Gastrocnemius medialis (tissue), 4 donors: ENCODE measurements at regions of chr19 and their contacts with region 1.

Region 1: DNA sequence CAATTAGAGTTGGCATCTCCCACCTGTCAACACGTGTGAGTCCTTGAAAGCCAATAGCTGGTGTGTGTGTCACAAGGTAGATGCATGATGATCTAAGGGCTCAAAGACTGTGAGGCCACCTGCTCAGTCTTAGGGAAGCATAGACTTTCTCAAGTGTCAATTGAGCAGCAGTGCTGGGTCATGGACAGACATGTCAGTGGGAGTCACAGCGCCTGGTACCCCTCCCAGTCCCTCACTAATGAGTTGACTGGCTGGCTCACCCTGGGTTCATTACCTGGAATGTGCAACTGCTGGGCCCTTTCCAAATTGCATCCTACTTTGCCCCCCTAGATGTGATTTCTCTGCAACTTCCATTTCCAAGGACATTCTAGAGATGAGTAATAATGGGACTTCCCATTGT is 9.1 kb upstream of the PSG6 start:
- DNase-seq: no peak
- ATAC-seq: no peak
- H3K4me3 ChIP-seq: no peak overlapping the region
- H3K27ac ChIP-seq: no peak overlapping the region
- H3K4me1 ChIP-seq: no peaks in the 10 kb centered on the region
- H3K27me3 ChIP-seq: no peaks in the 10 kb centered on the region
- CTCF ChIP-seq: no peak
- POLR2A ChIP-seq: no peak

Region 2: GRCh38 chr19:42244347-42245220 is 682.2 kb before region 1 on chr19:
- in situ Hi-C with region 1: no loop called
- intact Hi-C with region 1: no loop called
- DNase-seq: peak; percentile 87 to 89
- ATAC-seq: peak; percentile 53 to 54
- H3K4me3 ChIP-seq: peak overlapping the region; percentile 55 to 77 (median 73)
- H3K27ac ChIP-seq: peak overlapping the region; percentile 86 to 95 (median 87)
- H3K4me1 ChIP-seq: peaks cover 36 to 39% of the 10 kb centered on the region in 2 donors
- H3K27me3 ChIP-seq: no peaks in the 10 kb centered on the region
- CTCF ChIP-seq: peak; percentile 40 to 77 (median 64)
- POLR2A ChIP-seq: peak; percentile 59 to 71

Region 3: GRCh38 chr19:42450314-42450934 is 476.4 kb before region 1 on chr19:
- in situ Hi-C with region 1: no loop called
- intact Hi-C with region 1: no loop called
- DNase-seq: peak; percentile 37 to 68
- ATAC-seq: peak; percentile 80 to 92
- H3K4me3 ChIP-seq: no peak overlapping the region
- H3K27ac ChIP-seq: peak overlapping the region in 3 of 4 donors; percentile 28 to 49 (median 30)
- H3K4me1 ChIP-seq: no peaks in the 10 kb centered on the region
- H3K27me3 ChIP-seq: peaks cover 0 to 4% (median 0%) of the 10 kb centered on the region in 3 donors
- CTCF ChIP-seq: peak; percentile 74 to 83 (median 79)
- POLR2A ChIP-seq: no peak

Region 4: GRCh38 chr19:42563352-42564210 is 363.2 kb before region 1 on chr19:
- in situ Hi-C with region 1: no loop called
- intact Hi-C with region 1: no loop called
- DNase-seq: no peak
- ATAC-seq: peak; percentile 65 to 80
- H3K4me3 ChIP-seq: no peak overlapping the region
- H3K27ac ChIP-seq: peak overlapping the region in 3 of 4 donors; percentile 40 to 66 (median 50)
- H3K4me1 ChIP-seq: peaks cover 9 to 22% of the 10 kb centered on the region in 2 donors
- H3K27me3 ChIP-seq: no peaks in the 10 kb centered on the region
- CTCF ChIP-seq: peak in 4 of 5 experiments; percentile 26 to 52 (median 36)
- POLR2A ChIP-seq: no peak

Region 5: GRCh38 chr19:43028861-43029260 is 102.1 kb after region 1 on chr19:
- in situ Hi-C with region 1: no loop called
- intact Hi-C with region 1: loop called (anchors 5 kb)
- DNase-seq: no peak
- ATAC-seq: no peak
- H3K4me3 ChIP-seq: no peak overlapping the region
- H3K27ac ChIP-seq: no peak overlapping the region
- H3K4me1 ChIP-seq: no peaks in the 10 kb centered on the region
- H3K27me3 ChIP-seq: no peaks in the 10 kb centered on the region
- CTCF ChIP-seq: no peak
- POLR2A ChIP-seq: no peak